Esophagus squamous epithelium (tissue), 5 donors: ENCODE measurements at regions of chr3 and their contacts with region 1.

Region 1: DNA sequence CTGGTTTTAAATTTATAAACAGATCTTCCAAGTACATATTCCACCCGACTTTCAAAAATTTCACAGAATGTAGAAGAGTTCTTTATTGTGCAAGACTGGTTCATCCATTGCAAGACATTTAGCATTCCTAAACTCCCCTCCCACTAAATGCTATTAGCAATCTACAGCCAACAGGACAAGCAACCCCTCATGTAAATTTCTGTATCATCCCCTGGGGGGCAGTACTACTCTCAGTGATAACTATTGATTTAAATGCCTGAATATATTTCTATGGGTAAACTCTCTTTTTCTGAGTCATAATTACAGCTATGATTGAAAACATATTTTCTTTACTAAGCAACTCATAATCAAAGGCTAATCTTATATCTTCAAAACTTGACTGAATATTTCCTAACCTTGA is 10.7 kb upstream of the SLC15A2 start:
- DNase-seq: no peak
- H3K4me3 ChIP-seq: no peak overlapping the region
- H3K27ac ChIP-seq: no peak overlapping the region
- H3K4me1 ChIP-seq: no peaks in the 10 kb centered on the region
- H3K27me3 ChIP-seq: no peaks in the 10 kb centered on the region
- CTCF ChIP-seq: peak in 3 of 6 experiments; percentile 13 to 57 (median 34)
- POLR2A ChIP-seq: no peak

Region 2: GRCh38 chr3:121793078-121793477 is 90.4 kb before region 1 on chr3:
- intact Hi-C with region 1: no loop called
- DNase-seq: no peak
- H3K4me3 ChIP-seq: no peak overlapping the region
- H3K27ac ChIP-seq: no peak overlapping the region
- H3K4me1 ChIP-seq: no peaks in the 10 kb centered on the region
- H3K27me3 ChIP-seq: no peaks in the 10 kb centered on the region
- CTCF ChIP-seq: no peak
- POLR2A ChIP-seq: no peak

Region 3: GRCh38 chr3:122092460-122093165 is 209.1 kb after region 1 on chr3:
- intact Hi-C with region 1: loop called (anchors 10 kb)
- DNase-seq: no peak
- H3K4me3 ChIP-seq: no peak overlapping the region
- H3K27ac ChIP-seq: no peak overlapping the region
- H3K4me1 ChIP-seq: peaks cover 0 to 8% (median 0%) of the 10 kb centered on the region in 3 donors
- H3K27me3 ChIP-seq: no peaks in the 10 kb centered on the region
- CTCF ChIP-seq: peak in 5 of 6 experiments; percentile 26 to 80 (median 43)
- POLR2A ChIP-seq: no peak